Aorta (tissue), 5 donors: ENCODE measurements at regions of chr10 and their contacts with region 1.

Region 1: GRCh38 chr10:4254101-4254994 is 469.3 kb upstream of the KLF6 start:
- DNase-seq: no peak
- ATAC-seq: no peak
- H3K4me3 ChIP-seq: no peak overlapping the region
- H3K27ac ChIP-seq: no peak overlapping the region
- H3K4me1 ChIP-seq: peaks cover 0 to 2% of the 10 kb centered on the region in 2 donors
- H3K27me3 ChIP-seq: no peaks in the 10 kb centered on the region

Region 2: DNA sequence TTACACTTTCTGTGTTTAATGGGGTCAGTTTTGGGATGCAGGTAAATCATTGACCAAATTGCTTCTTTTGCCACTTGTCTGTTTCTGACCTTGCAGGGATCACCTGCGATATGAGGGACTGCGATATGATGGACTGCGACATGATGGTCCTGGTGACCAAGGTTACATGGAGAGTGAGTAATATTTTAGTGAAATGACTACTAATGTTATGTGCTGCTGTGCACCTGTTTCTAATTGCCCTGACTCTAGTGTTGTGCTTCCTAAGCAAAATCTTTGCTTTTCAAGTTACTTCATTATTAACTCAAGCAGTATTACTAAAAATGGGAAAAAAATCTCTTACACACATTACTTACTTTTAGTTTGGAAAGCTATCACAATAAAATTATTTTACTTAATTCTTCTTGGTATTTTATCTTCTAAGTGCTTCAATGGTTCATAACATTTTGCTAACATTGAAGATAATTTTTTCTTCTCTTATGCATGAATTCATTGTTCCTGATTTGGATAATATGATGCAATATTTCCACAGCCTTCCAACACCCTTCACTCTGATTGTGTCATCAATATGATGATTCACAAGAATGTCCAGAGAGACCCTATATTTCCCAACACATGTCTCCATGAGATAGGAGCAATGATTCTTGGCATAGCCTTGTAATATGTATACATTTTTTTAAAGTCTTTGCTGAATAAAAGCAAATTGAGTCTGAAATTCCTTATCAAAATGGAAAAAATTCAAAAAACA is 265.5 kb after region 1 on chr10:
- intact Hi-C with region 1: loop called in 1 of 2 experiments (anchors 10 kb)
- DNase-seq: no peak
- ATAC-seq: no peak
- H3K4me3 ChIP-seq: no peak overlapping the region
- H3K27ac ChIP-seq: no peak overlapping the region
- H3K4me1 ChIP-seq: no peaks in the 10 kb centered on the region
- H3K27me3 ChIP-seq: no peaks in the 10 kb centered on the region